H1 (cell line): ENCODE measurements at regions of chr2 and their contacts with region 1.

Region 1: DNA sequence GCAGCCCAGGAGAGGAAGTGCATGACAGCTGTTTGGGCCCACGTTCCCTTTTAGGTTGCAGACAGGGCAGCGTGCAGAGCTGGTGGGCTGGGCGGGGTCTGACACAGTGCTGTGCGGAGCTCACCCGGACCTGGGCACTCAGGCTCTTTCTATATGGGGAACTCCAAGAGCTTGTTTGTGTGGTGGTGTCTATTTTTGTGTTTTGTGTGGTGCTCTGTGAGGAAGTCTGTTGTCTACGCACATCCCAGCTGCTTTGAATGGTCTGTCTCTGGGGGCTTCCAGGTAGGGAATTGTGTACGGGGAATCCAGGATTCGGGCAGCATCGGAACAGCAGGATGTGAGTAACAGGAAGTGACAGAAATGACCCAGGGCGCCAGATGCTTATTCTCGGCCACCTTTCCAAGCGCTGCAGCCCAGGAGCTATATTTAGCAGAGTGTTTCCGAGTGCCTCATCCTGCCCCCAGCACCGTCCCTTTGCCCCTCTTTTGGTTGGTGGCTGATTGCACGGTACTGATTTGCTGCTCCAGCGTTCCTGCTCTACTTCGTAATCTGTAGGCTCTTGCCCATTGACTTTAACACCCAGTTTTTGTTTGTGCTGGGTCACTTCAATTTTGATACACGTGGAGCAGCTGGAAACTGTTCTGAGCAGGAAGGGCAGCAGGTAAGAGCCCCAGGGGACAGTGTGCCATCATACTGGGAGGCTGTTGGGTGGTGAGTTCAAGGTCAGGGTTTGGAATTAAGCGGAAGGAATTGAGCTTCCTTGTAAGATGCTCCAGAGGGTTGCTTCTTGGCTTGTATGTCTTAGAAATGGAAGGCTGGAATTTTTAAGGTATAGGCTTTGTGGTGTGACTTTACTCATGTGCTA is 64.7 kb downstream of the DGKD start:
- DNase-seq: peak in 1 of 2 experiments; percentile 43
- H3K4me3 ChIP-seq: no peak overlapping the region
- H3K27ac ChIP-seq: no peak overlapping the region
- H3K4me1 ChIP-seq: peaks cover 0 to 11% (median 6%) of the 10 kb centered on the region in 4 experiments; a peak in 6 of 7 replicates
- H3K27me3 ChIP-seq: no peaks in the 10 kb centered on the region
- CTCF ChIP-seq: no peak
- EP300 ChIP-seq: no peak
- POLR2A ChIP-seq: no peak
- RAD21 ChIP-seq: no peak

Region 2: GRCh38 chr2:233404222-233404621 is 14.8 kb before region 1 on chr2:
- CTCF ChIA-PET with region 1: interaction called, 13 read pairs
- POLR2A ChIA-PET with region 1: interaction called, 3 read pairs
- DNase-seq: no peak
- H3K4me3 ChIP-seq: no peak overlapping the region
- H3K27ac ChIP-seq: no peak overlapping the region
- H3K4me1 ChIP-seq: peaks cover 5 to 10% (median 6%) of the 10 kb centered on the region in 4 experiments; a peak in 5 of 7 replicates
- H3K27me3 ChIP-seq: no peaks in the 10 kb centered on the region
- CTCF ChIP-seq: peak; percentile 74 to 83 (median 81)
- EP300 ChIP-seq: no peak
- POLR2A ChIP-seq: no peak
- RAD21 ChIP-seq: peak; percentile 74 to 83

Region 3: GRCh38 chr2:233593201-233593600 is 174.2 kb after region 1 on chr2:
- CTCF ChIA-PET with region 1: no interaction called
- POLR2A ChIA-PET with region 1: no interaction called
- DNase-seq: no peak
- H3K4me3 ChIP-seq: no peak overlapping the region
- H3K27ac ChIP-seq: no peak overlapping the region
- H3K4me1 ChIP-seq: no peaks in the 10 kb centered on the region
- H3K27me3 ChIP-seq: no peaks in the 10 kb centered on the region
- CTCF ChIP-seq: no peak
- EP300 ChIP-seq: no peak
- POLR2A ChIP-seq: no peak
- RAD21 ChIP-seq: no peak